H1 (cell line): ENCODE measurements at regions of chr17 and their contacts with region 1.

Region 1: GRCh38 chr17:4881761-4882555 is 17.4 kb upstream of the C17orf107 start:
- DNase-seq: peak in 1 of 2 experiments; percentile 89
- H3K4me3 ChIP-seq: no peak overlapping the region
- H3K27ac ChIP-seq: no peak overlapping the region
- H3K4me1 ChIP-seq: peaks cover 0 to 4% (median 1%) of the 10 kb centered on the region in 4 experiments; a peak in 3 of 7 replicates
- H3K27me3 ChIP-seq: no peaks in the 10 kb centered on the region
- CTCF ChIP-seq: peak; percentile 88 to 96 (median 94)
- EP300 ChIP-seq: no peak
- POLR2A ChIP-seq: no peak
- RAD21 ChIP-seq: peak; percentile 87 to 89

Region 2: DNA sequence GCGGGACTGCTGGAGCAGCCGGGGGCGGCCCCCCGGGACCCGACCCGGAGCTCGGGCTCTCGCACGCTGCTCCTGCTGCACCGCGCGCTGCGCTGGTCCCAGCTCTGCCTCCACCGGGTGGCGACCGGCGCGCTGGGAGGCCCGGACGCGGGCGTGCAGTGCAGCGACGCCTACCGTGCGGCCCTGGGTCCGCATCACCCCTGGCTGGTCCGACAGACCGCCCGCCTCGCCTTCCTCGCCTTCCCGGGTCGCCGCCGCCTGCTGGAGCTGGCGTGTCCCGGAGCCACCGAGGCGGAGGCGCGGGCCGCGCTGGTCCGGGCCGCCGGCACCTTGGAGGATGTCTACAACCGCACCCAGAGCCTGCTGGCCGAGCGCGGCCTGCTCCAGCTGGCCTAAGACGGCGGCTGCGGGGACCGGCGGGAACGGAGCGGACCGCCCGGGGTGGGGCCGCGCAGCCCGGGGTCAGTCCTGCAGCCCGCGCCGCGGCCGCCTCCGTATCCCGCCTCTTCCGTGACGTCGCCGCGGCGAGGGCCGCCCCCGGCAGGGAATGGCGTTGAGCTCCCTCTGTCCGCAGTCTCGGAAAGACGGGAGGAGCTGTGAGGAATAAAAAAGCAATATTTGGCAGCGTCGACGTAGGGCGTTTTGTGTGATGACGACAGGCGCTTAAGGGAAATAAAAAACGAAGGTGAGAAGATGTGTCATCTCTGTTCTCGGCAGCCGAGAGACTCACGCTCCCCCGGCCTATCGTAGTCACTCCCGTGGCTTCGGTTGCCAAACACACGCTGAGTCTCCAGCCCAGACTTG is 91.9 kb before region 1 on chr17:
- CTCF ChIA-PET with region 1: interaction called, 27 read pairs
- POLR2A ChIA-PET with region 1: interaction called, 3 read pairs
- DNase-seq: peak in 1 of 2 experiments; percentile 81
- H3K4me3 ChIP-seq: peak overlapping the region; percentile 46 to 74 (median 66)
- H3K27ac ChIP-seq: no peak overlapping the region
- H3K4me1 ChIP-seq: peaks cover 0 to 15% (median 8%) of the 10 kb centered on the region in 4 experiments; a peak in 5 of 7 replicates
- H3K27me3 ChIP-seq: peaks cover 3 to 30% (median 17%) of the 10 kb centered on the region in 4 experiments
- CTCF ChIP-seq: peak; percentile 57 to 75 (median 73)
- EP300 ChIP-seq: no peak
- POLR2A ChIP-seq: no peak
- RAD21 ChIP-seq: peak in 1 of 2 experiments; percentile 8; a peak in 2 of 4 replicates

Region 3: GRCh38 chr17:4806777-4807604 is 75.0 kb before region 1 on chr17 and contains the start of gene PLD2:
- CTCF ChIA-PET with region 1: interaction called, 14 read pairs
- POLR2A ChIA-PET with region 1: interaction called, 5 read pairs
- DNase-seq: peak in 1 of 2 experiments; percentile 89
- H3K4me3 ChIP-seq: peak within 1 kb of the TSS; percentile 68 to 97 (median 79)
- H3K27ac ChIP-seq: no peak within 1 kb of the TSS; the same call in 1 of the 2 replicates
- H3K4me1 ChIP-seq: peaks cover 0 to 5% (median 4%) of the 10 kb centered on the region in 4 experiments; a peak in 3 of 7 replicates
- H3K27me3 ChIP-seq: no peaks in the 10 kb centered on the region; a peak in 1 of 7 replicates
- CTCF ChIP-seq: no peak
- EP300 ChIP-seq: no peak
- POLR2A ChIP-seq: peak in 1 of 2 experiments; percentile 70; a peak in 2 of 3 replicates
- RAD21 ChIP-seq: no peak
- total RNA-seq, gene PLD2: 48.4 and 53.0 TPM in 2 replicates

Region 4: DNA sequence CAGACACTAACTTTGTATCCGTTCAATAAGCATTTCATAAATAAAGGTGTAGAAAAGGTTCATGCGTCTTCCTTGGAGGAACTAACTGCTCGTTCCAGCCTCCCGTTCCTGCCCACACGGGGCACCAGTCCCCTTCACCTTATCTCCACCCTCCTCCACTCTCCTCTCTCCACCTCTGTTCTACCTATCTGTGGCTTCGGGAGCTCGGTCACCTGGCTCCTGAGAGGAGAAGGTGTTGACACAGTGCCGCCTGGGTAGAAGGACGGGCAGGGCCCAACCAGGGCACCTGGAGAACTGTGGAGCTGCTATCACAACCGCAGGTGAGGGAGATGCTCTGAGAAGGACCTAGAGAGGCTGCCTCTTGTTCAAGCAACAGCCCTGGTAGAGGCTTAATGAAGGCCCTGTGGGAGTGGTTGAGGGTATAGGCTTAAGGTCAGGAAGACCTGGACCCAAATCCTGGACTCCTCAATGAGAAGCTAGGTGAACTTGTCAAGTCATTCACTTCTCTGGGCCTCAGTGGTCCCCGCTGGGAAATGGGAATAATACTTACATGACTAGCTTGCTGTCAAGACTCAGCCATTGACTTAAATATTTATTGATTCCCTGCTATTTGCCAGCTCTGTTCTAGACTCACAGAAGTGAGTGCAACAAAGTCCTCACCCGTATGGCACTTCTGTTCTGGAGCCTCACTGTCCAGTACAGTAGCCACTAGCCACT is 58.4 kb before region 1 on chr17:
- CTCF ChIA-PET with region 1: interaction called, 10 read pairs
- POLR2A ChIA-PET with region 1: no interaction called
- DNase-seq: no peak
- H3K4me3 ChIP-seq: no peak overlapping the region
- H3K27ac ChIP-seq: no peak overlapping the region
- H3K4me1 ChIP-seq: no peaks in the 10 kb centered on the region
- H3K27me3 ChIP-seq: no peaks in the 10 kb centered on the region
- CTCF ChIP-seq: peak in 1 of 3 experiments; percentile 19; a peak in 1 of 4 replicates
- EP300 ChIP-seq: no peak
- POLR2A ChIP-seq: no peak
- RAD21 ChIP-seq: 0 out of 4 replicates have a peak, but pooled peaks of 1 of the 2 experiments have one; percentile 6

Region 5: DNA sequence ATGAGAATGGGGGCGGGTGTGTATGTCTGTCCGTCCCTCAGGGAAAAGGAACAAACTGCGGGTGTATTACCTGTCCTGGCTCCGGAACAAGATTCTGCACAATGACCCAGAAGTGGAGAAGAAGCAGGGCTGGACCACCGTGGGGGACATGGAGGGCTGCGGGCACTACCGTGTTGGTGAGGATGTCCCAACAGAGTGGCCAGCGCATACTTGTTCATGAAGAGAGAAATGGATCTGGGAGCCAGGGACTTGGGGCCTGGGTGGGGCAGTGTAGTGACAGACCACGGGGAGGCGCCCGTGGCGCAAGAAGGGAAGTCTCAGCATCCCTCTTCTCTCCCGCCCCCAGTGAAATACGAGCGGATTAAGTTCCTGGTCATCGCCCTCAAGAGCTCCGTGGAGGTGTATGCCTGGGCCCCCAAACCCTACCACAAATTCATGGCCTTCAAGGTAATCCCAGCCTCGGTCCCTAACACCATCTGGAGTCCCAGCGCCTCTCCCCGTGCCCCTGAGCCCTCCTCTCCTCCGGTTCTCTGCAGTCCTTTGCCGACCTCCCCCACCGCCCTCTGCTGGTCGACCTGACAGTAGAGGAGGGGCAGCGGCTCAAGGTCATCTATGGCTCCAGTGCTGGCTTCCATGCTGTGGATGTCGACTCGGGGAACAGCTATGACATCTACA is 13.8 kb after region 1 on chr17:
- CTCF ChIA-PET with region 1: interaction called, 23 read pairs
- POLR2A ChIA-PET with region 1: no interaction called
- DNase-seq: peak in 1 of 2 experiments; percentile 75
- H3K4me3 ChIP-seq: no peak overlapping the region
- H3K27ac ChIP-seq: 0 out of 2 replicates have a peak overlapping the region, but pooled peaks have one; percentile 55
- H3K4me1 ChIP-seq: peaks cover 0 to 4% (median 2%) of the 10 kb centered on the region in 4 experiments; a peak in 5 of 7 replicates
- H3K27me3 ChIP-seq: no peaks in the 10 kb centered on the region
- CTCF ChIP-seq: peak; percentile 54 to 69 (median 55)
- EP300 ChIP-seq: no peak
- POLR2A ChIP-seq: no peak
- RAD21 ChIP-seq: peak; percentile 21 to 25; a peak in 3 of 4 replicates